ENCODE measurements at regions of chr2 and their contacts with region 1.

Region 1: DNA sequence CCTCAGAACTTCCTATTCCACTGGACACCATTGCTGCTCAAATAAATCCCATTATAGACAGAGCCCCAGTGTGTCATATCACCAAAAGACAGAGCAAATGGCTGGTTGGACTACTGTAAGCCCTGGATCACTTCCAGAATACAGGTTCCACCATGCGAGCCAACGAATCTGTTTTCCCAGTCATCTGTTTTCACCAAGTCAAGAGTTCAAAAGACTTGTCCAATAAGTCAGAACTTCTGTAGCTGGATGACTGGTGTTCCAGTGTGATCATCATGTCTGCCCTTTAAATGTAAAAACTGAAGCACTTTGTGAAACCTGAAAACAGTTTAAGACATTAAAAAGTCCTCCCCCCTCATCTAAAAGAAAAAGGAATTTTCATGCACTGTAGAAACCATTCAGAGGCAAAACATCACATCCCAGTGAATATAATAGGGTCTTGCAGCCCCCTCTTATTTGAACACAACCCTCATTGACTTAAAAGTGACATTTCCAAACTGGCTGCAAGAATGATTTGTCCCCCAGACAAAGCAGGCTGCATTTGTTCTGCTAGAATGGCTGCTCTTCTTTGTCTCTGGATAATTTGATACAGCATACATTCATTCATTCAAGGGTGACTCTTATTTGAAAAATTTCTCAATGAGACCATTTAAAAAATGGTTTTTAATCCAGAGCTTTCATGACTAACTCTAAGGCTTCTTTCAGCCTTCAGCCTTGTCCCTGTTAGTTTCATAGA is 64.6 kb upstream of the TANC1 start:
- DNase-seq: no peak
- H3K4me3 ChIP-seq: no peak overlapping the region
- H3K4me3 Mint-ChIP-seq: no peak overlapping the region
- H3K27ac Mint-ChIP-seq: no peak overlapping the region
- H3K4me1 ChIP-seq: no peaks in the 10 kb centered on the region
- H3K4me1 Mint-ChIP-seq: no peaks in the 10 kb centered on the region
- H3K27me3 ChIP-seq: no peaks in the 10 kb centered on the region
- H3K27me3 Mint-ChIP-seq: no peaks in the 10 kb centered on the region
- CTCF ChIP-seq: no peak

Region 2: DNA sequence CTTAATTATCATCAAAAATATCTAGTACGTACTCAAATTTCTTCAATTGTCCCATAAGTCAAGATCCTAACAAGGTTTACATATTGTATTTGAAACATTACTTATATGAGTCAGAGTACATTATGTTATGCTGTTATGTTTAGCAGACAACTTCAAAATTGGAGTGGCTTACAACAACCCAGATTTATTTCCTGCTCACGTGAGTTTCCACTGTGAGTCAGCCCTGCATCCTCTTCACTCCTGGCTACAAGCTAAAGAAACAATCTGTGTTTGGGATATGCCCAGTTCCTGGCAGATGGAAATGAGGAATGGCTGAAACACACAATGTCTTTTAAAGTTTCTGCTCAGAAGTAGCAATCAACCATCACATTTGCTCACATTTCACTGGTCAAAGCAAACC is 33.1 kb after region 1 on chr2:
- CTCF ChIA-PET with region 1: no interaction called
- POLR2A ChIA-PET with region 1: no interaction called
- intact Hi-C with region 1: no loop called
- DNase-seq: no peak
- H3K4me3 ChIP-seq: no peak overlapping the region
- H3K4me3 Mint-ChIP-seq: no peak overlapping the region
- H3K27ac Mint-ChIP-seq: no peak overlapping the region
- H3K4me1 ChIP-seq: no peaks in the 10 kb centered on the region
- H3K4me1 Mint-ChIP-seq: no peaks in the 10 kb centered on the region
- H3K27me3 ChIP-seq: no peaks in the 10 kb centered on the region
- H3K27me3 Mint-ChIP-seq: no peaks in the 10 kb centered on the region
- CTCF ChIP-seq: no peak

Region 3: GRCh38 chr2:158948964-158949699 is 45.3 kb after region 1 on chr2:
- CTCF ChIA-PET with region 1: no interaction called
- POLR2A ChIA-PET with region 1: no interaction called
- intact Hi-C with region 1: loop called (anchors 5 kb)
- DNase-seq: peak in 1 of 2 experiments; percentile 71
- H3K4me3 ChIP-seq: no peak overlapping the region
- H3K4me3 Mint-ChIP-seq: peak overlapping the region; percentile 28
- H3K27ac Mint-ChIP-seq: peak overlapping the region; percentile 13
- H3K4me1 ChIP-seq: peaks cover 34% of the 10 kb centered on the region
- H3K4me1 Mint-ChIP-seq: peaks cover 29% of the 10 kb centered on the region
- H3K27me3 ChIP-seq: no peaks in the 10 kb centered on the region
- H3K27me3 Mint-ChIP-seq: no peaks in the 10 kb centered on the region
- CTCF ChIP-seq: no peak

Region 4: GRCh38 chr2:158994920-158995676 is 91.2 kb after region 1 on chr2:
- CTCF ChIA-PET with region 1: interaction called, 3 read pairs
- POLR2A ChIA-PET with region 1: no interaction called
- intact Hi-C with region 1: loop called (anchors 1 kb)
- DNase-seq: peak; percentile 64 to 72
- H3K4me3 ChIP-seq: no peak overlapping the region
- H3K4me3 Mint-ChIP-seq: peak overlapping the region; percentile 63
- H3K27ac Mint-ChIP-seq: peak overlapping the region; percentile 57
- H3K4me1 ChIP-seq: peaks cover 50% of the 10 kb centered on the region
- H3K4me1 Mint-ChIP-seq: peaks cover 49% of the 10 kb centered on the region
- H3K27me3 ChIP-seq: no peaks in the 10 kb centered on the region
- H3K27me3 Mint-ChIP-seq: no peaks in the 10 kb centered on the region
- CTCF ChIP-seq: no peak

Region 5: DNA sequence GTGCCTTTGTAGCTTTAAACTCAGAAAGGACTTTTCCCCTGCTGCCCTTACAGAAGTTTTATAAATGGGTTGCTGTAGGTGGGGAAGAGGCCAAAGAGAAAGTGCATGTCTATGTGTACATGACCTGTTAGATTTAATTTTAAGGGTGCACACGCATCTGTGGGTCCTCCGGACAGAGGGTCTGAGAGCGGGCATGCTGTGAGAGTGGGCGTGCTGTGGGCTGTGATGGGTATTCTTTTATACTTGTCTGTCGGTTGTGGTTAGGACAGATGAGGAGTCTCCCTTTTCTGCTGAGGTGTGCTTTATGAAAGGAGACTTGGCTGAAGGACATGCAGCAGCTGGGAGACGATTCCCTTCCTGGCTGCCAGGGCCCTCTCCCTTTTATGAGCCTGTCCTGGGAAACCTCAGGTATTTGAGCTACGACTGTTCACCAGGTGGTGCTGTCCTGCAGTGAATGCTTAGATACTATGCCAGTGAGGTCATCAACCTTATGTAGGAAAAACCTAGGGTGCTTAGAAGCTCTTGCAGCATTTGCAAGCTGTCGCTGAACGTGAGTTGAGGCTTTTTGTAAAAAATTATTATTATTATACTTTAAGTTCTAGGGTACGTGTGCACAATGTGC is 132.0 kb after region 1 on chr2:
- CTCF ChIA-PET with region 1: interaction called, 3 read pairs
- POLR2A ChIA-PET with region 1: no interaction called
- intact Hi-C with region 1: loop called (anchors 1 kb)
- DNase-seq: peak; percentile 79 to 85
- H3K4me3 ChIP-seq: no peak overlapping the region
- H3K4me3 Mint-ChIP-seq: no peak overlapping the region
- H3K27ac Mint-ChIP-seq: no peak overlapping the region
- H3K4me1 ChIP-seq: peaks cover 30% of the 10 kb centered on the region
- H3K4me1 Mint-ChIP-seq: peaks cover 54% of the 10 kb centered on the region
- H3K27me3 ChIP-seq: no peaks in the 10 kb centered on the region
- H3K27me3 Mint-ChIP-seq: no peaks in the 10 kb centered on the region
- CTCF ChIP-seq: peak; percentile 54 to 72

Region 6: GRCh38 chr2:159185401-159186130 is 281.7 kb after region 1 on chr2:
- CTCF ChIA-PET with region 1: no interaction called
- POLR2A ChIA-PET with region 1: no interaction called
- intact Hi-C with region 1: loop called (anchors 1 kb)
- DNase-seq: peak in 1 of 2 experiments; percentile 63
- H3K4me3 ChIP-seq: no peak overlapping the region
- H3K4me3 Mint-ChIP-seq: no peak overlapping the region
- H3K27ac Mint-ChIP-seq: no peak overlapping the region
- H3K4me1 ChIP-seq: no peaks in the 10 kb centered on the region
- H3K4me1 Mint-ChIP-seq: no peaks in the 10 kb centered on the region
- H3K27me3 ChIP-seq: no peaks in the 10 kb centered on the region
- H3K27me3 Mint-ChIP-seq: no peaks in the 10 kb centered on the region
- CTCF ChIP-seq: peak in 1 of 2 experiments; percentile 75